Sciatic nerve (tissue), 2 donors: ENCODE measurements at regions of chr11 and their contacts with region 1.

Region 1: GRCh38 chr11:32221476-32222010 is 130.7 kb downstream of the RCN1 start:
- DNase-seq: no peak
- ATAC-seq: no peak

Region 2: GRCh38 chr11:32105871-32106560 is 115.5 kb before region 1 on chr11:
- intact Hi-C with region 1: no loop called
- DNase-seq: no peak
- ATAC-seq: no peak

Region 3: GRCh38 chr11:32137263-32137662 is 84.3 kb before region 1 on chr11:
- intact Hi-C with region 1: no loop called
- DNase-seq: no peak
- ATAC-seq: no peak

Region 4: GRCh38 chr11:32244453-32244852 is 22.9 kb after region 1 on chr11:
- intact Hi-C with region 1: loop called (anchors 1 kb)
- DNase-seq: no peak
- ATAC-seq: no peak